ENCODE measurements at regions of chr4 and their contacts with region 1.

Region 1: DNA sequence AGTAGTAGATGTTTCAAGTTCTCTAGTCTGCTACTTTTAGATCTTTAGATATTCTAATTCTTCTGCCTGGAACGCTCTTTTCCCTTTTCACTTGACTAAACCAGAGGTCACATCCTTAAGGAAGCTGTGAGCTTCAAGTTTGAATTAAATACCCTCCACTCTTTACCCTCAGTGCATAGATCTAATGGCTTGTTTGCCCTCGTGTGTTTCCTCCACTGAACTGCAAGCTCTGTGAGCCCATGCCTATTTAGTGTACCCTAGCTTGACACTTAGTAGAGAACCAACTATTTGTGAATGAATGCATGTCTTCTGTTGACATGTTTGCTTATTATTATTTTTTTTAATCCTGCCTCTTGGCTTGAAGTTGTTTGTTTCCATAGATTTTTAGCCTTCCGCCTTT is 138.3 kb downstream of the PDE5A start:
- DNase-seq: no peak
- ATAC-seq: no peak
- H3K4me3 Mint-ChIP-seq: no peak overlapping the region
- H3K27ac Mint-ChIP-seq: no peak overlapping the region
- H3K4me1 Mint-ChIP-seq: no peaks in the 10 kb centered on the region
- H3K27me3 Mint-ChIP-seq: no peaks in the 10 kb centered on the region
- CTCF ChIP-seq: no peak

Region 2: GRCh38 chr4:118981839-118982381 is 508.4 kb before region 1 on chr4:
- CTCF ChIA-PET with region 1: interaction called, 3 read pairs
- POLR2A ChIA-PET with region 1: no interaction called
- intact Hi-C with region 1: loop called (anchors 10 kb)
- DNase-seq: no peak
- ATAC-seq: peak; percentile 57
- H3K4me3 Mint-ChIP-seq: no peak overlapping the region
- H3K27ac Mint-ChIP-seq: no peak overlapping the region
- H3K4me1 Mint-ChIP-seq: no peaks in the 10 kb centered on the region
- H3K27me3 Mint-ChIP-seq: peaks cover 4% of the 10 kb centered on the region
- CTCF ChIP-seq: no peak

Region 3: GRCh38 chr4:119041951-119042560 is 448.3 kb before region 1 on chr4:
- CTCF ChIA-PET with region 1: interaction called, 7 read pairs
- POLR2A ChIA-PET with region 1: no interaction called
- intact Hi-C with region 1: loop called (anchors 1 kb)
- DNase-seq: no peak
- ATAC-seq: peak; percentile 83
- H3K4me3 Mint-ChIP-seq: no peak overlapping the region
- H3K27ac Mint-ChIP-seq: no peak overlapping the region
- H3K4me1 Mint-ChIP-seq: peaks cover 5% of the 10 kb centered on the region
- H3K27me3 Mint-ChIP-seq: no peaks in the 10 kb centered on the region
- CTCF ChIP-seq: no peak

Region 4: DNA sequence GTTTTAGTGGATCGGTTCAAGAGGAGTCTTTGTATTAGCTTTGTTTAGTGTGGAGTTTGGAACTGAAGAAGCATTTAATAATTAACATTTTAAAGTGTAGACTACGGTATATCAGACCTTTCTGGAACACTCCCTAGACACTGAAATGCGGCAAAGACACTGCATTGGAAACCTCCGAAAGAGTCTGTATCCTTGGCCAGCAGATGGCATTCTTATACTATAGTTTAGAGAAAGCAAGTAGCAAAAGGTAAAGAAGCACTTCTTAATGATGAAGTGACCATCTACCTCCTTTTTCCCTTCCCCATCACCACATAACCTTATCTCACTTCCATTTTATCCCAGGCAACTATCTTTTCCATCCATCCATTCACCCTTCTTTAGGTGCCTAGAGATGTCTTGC is 176.0 kb before region 1 on chr4:
- CTCF ChIA-PET with region 1: no interaction called
- POLR2A ChIA-PET with region 1: no interaction called
- intact Hi-C with region 1: loop called (anchors 1 kb)
- DNase-seq: no peak
- ATAC-seq: peak; percentile 57
- H3K4me3 Mint-ChIP-seq: no peak overlapping the region
- H3K27ac Mint-ChIP-seq: no peak overlapping the region
- H3K4me1 Mint-ChIP-seq: no peaks in the 10 kb centered on the region
- H3K27me3 Mint-ChIP-seq: peaks cover 8% of the 10 kb centered on the region
- CTCF ChIP-seq: no peak

Measured in activated B cell treated with CpG ODN at 0.5 μM for 24 hours (primary cell).